ENCODE measurements at regions of chr19 and their contacts with region 1.

Region 1: GRCh38 chr19:46704379-46705076 is 12.4 kb downstream of the PRKD2 start:
- DNase-seq: peak; percentile 42
- H3K4me3 ChIP-seq: no peak overlapping the region
- H3K27ac ChIP-seq: no peak overlapping the region
- H3K4me1 ChIP-seq: no peaks in the 10 kb centered on the region
- H3K27me3 ChIP-seq: no peaks in the 10 kb centered on the region
- CTCF ChIP-seq: peak; percentile 80 to 94 (median 92)
- POLR2A ChIP-seq: no peak

Region 2: GRCh38 chr19:46728693-46729676 is 24.5 kb after region 1 on chr19:
- intact Hi-C with region 1: loop called (anchors 1 kb)
- DNase-seq: peak; percentile 60
- H3K4me3 ChIP-seq: no peak overlapping the region
- H3K27ac ChIP-seq: no peak overlapping the region
- H3K4me1 ChIP-seq: no peaks in the 10 kb centered on the region
- H3K27me3 ChIP-seq: no peaks in the 10 kb centered on the region
- CTCF ChIP-seq: peak; percentile 72 to 89 (median 79)
- POLR2A ChIP-seq: no peak

Region 3: DNA sequence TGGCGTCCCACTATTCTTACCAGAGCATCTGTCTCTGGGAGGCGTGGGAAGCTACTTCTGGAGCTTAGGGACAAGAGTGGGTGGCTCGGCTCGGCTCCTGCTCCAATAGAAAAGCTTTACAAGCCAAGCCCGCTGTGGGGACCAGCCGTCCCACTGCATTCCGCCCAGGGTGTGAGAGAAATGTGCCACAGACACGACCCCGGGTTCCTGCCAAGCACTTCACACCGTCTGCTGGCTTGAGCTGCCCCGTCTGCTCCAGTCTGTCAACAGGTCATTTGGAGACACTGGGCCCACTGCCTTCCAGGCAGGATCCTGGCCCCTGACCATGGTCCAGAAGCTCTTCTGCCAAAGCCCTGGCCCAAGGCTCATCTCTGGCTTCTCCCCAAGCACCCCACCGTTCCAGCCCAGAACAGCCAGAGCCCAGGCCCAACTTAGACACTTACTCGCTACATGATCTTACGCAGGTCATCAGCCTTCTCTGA is 34.8 kb after region 1 on chr19:
- intact Hi-C with region 1: no loop called
- DNase-seq: no peak
- H3K4me3 ChIP-seq: no peak overlapping the region
- H3K27ac ChIP-seq: peak overlapping the region in 1 of 2 donors; percentile 42
- H3K4me1 ChIP-seq: no peaks in the 10 kb centered on the region
- H3K27me3 ChIP-seq: no peaks in the 10 kb centered on the region
- CTCF ChIP-seq: no peak
- POLR2A ChIP-seq: no peak